GM12878 (cell line): ENCODE measurements at regions of chr1 and their contacts with region 1.

Region 1: DNA sequence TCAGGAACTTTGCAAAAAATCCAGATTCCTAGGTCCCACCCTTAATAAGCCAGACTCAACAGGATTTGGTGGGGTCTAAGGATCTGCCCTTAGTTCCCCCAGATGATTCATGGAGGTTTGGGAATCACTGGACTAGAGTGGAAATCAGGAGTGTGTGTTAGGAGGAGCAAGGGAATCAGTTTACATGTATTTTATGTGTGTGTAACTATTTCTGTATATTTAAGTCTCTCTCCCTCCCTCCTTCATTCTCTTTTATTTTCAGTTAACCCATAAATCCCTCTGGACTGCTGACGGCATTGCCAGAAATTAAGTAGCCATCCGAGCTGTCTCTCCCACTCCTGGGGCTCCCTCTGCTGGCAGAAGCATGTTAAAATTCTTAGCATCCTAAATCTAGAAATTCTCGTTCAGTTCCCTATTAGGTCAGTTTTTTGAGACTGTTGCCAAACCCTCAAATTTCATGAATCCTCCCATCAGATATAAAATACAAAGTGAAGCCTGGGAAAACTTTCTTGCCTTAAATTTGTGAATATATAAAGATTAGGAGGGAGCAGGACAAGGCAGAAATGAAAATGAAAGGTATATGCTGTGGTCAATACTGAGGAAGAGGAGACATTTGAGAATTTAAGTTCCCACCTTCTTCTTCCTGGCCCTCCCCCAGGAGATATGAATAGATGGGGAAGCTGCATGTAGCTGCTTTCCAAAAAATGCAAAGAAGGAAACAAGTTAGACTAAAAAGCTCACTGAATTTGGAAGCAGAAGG is 11.7 kb upstream of the HSD11B1 start:
- DNase-seq: peak; percentile 34
- ATAC-seq: peak; percentile 89
- H3K4me3 ChIP-seq: no peak overlapping the region
- H3K27ac ChIP-seq: no peak overlapping the region
- H3K4me1 ChIP-seq: no peaks in the 10 kb centered on the region
- H3K27me3 ChIP-seq: no peaks in the 10 kb centered on the region
- CTCF ChIP-seq: peak; percentile 80 to 92 (median 83)
- EP300 ChIP-seq: 0 out of 4 replicates have a peak, but pooled peaks of 1 of the 2 experiments have one; percentile 31
- POLR2A ChIP-seq: no peak
- RAD21 ChIP-seq: peak; percentile 97

Region 2: DNA sequence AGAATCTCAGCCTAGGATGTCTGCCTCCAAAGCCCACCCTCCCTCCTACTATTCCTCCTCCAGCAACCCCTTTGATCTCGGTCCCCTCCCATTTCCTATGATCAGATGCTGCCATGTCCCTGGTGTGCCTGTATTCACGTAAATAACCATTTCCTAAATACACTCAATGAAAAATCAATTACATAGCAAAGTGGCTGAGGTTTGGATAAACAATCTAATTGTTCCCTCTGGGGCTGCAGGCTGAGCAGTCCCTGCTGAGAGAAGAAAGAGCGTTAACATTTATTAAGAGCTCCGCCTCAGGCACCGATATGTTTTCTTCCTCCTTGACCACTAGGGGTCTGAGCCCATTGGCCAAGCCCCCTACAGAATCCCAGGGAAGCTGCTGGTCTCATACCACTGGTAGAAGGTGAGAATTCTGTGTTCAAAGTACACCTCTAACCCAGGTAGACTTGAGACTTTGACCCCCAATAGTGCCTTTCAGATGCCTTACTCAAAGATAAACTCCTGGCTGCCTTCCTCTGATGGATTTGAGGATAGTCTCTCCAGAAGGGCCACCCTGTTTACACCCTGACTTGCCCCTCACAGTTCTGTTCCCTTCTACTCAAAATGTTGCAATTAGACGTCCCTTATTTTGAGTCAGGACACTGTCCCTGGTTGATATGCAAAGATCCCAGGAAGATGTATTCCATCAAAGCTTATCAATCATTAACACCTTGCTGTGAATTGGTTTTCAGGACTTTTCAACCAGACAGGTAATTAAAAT is 143.3 kb before region 1 on chr1:
- CTCF ChIA-PET with region 1: no interaction called
- POLR2A ChIA-PET with region 1: no interaction called
- RAD21 ChIA-PET with region 1: no interaction called
- SMC1A ChIA-PET with region 1: no interaction called
- in situ Hi-C with region 1: no loop called
- intact Hi-C with region 1: no loop called
- DNase-seq: no peak
- ATAC-seq: 0 out of 3 replicates have a peak, but pooled peaks have one; percentile 28
- H3K4me3 ChIP-seq: no peak overlapping the region
- H3K27ac ChIP-seq: no peak overlapping the region
- H3K4me1 ChIP-seq: no peaks in the 10 kb centered on the region
- H3K27me3 ChIP-seq: peaks cover 0 to 3% of the 10 kb centered on the region in 2 experiments; a peak in 2 of 4 replicates
- CTCF ChIP-seq: 0 out of 6 replicates have a peak, but pooled peaks of 1 of the 3 experiments have one; percentile 11
- EP300 ChIP-seq: no peak
- POLR2A ChIP-seq: no peak
- RAD21 ChIP-seq: no peak

Region 3: GRCh38 chr1:209576798-209577197 is 116.1 kb before region 1 on chr1:
- CTCF ChIA-PET with region 1: interaction called, 307 read pairs
- POLR2A ChIA-PET with region 1: no interaction called
- RAD21 ChIA-PET with region 1: interaction called, 7 read pairs
- SMC1A ChIA-PET with region 1: interaction called, 30 read pairs
- in situ Hi-C with region 1: loop called (anchors 5 kb)
- intact Hi-C with region 1: loop called (anchors 1 kb)
- DNase-seq: peak; percentile 12
- ATAC-seq: peak; percentile 99
- H3K4me3 ChIP-seq: no peak overlapping the region
- H3K27ac ChIP-seq: no peak overlapping the region
- H3K4me1 ChIP-seq: no peaks in the 10 kb centered on the region
- H3K27me3 ChIP-seq: peaks cover under 1 to 1% of the 10 kb centered on the region in 2 experiments; a peak in 3 of 4 replicates
- CTCF ChIP-seq: peak; percentile 93 to 96 (median 94)
- EP300 ChIP-seq: no peak
- POLR2A ChIP-seq: no peak
- RAD21 ChIP-seq: peak; percentile 86

Region 4: GRCh38 chr1:209601809-209602657 is 90.9 kb before region 1 on chr1:
- CTCF ChIA-PET with region 1: interaction called, 47 read pairs
- POLR2A ChIA-PET with region 1: no interaction called
- RAD21 ChIA-PET with region 1: interaction called, 8 read pairs
- SMC1A ChIA-PET with region 1: interaction called, 15 read pairs
- in situ Hi-C with region 1: no loop called
- intact Hi-C with region 1: loop called (anchors 1 kb)
- DNase-seq: no peak
- ATAC-seq: peak; percentile 95
- H3K4me3 ChIP-seq: no peak overlapping the region
- H3K27ac ChIP-seq: no peak overlapping the region
- H3K4me1 ChIP-seq: peaks cover under 1% of the 10 kb centered on the region; the same call in 1 of the 2 replicates
- H3K27me3 ChIP-seq: no peaks in the 10 kb centered on the region
- CTCF ChIP-seq: peak; percentile 64 to 82 (median 70); a peak in 5 of 6 replicates
- EP300 ChIP-seq: no peak
- POLR2A ChIP-seq: no peak
- RAD21 ChIP-seq: peak; percentile 67

Region 5: DNA sequence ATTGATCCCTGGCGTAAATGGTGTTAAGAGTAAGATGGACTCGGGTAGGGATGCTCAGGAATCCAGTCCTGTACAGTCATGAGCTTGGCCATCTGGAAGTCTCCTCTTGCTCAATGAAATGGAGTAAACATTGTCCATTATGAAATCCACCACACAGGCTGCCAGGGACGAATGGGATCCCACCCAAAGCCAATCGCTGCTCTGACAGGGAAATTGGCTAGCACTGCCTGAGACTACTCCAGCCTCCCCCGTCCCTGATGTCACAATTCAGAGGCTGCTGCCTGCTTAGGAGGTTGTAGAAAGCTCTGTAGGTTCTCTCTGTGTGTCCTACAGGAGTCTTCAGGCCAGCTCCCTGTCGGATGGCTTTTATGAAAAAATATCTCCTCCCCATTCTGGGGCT is 11.7 kb after region 1 on chr1 and contains the start of gene HSD11B1:
- CTCF ChIA-PET with region 1: interaction called, 6 read pairs
- POLR2A ChIA-PET with region 1: no interaction called
- RAD21 ChIA-PET with region 1: interaction called, 11 read pairs
- SMC1A ChIA-PET with region 1: interaction called, 7 read pairs
- in situ Hi-C with region 1: no loop called
- intact Hi-C with region 1: no loop called
- DNase-seq: no peak
- ATAC-seq: no peak
- H3K4me3 ChIP-seq: no peak within 1 kb of the TSS
- H3K27ac ChIP-seq: no peak within 1 kb of the TSS
- H3K4me1 ChIP-seq: peaks cover 3% of the 10 kb centered on the region; the same call in 1 of the 2 replicates
- H3K27me3 ChIP-seq: no peaks in the 10 kb centered on the region
- CTCF ChIP-seq: no peak
- EP300 ChIP-seq: no peak
- POLR2A ChIP-seq: no peak
- RAD21 ChIP-seq: no peak
- polyA plus RNA-seq, gene HSD11B1: 0.04 to 0.27 TPM

Region 6: DNA sequence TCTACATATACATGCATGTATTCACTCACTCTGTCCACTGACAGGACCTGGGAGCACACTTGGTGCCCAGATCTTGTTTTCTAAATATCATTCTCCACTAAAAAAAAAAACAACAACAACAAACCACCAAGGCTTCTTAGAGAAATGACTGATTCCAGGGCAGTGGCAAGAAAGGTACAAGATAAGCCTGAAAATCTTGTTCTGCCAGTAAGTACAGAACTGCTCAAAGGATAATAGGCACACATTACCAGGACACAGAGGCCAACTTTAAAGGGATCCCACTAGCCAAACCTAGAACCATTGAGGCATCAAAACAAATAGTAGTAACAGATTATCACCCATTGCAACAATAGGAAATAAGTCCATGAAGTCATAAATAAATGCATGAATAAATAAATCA is 22.4 kb after region 1 on chr1:
- CTCF ChIA-PET with region 1: no interaction called
- POLR2A ChIA-PET with region 1: no interaction called
- RAD21 ChIA-PET with region 1: no interaction called
- SMC1A ChIA-PET with region 1: no interaction called
- in situ Hi-C with region 1: no loop called
- intact Hi-C with region 1: no loop called
- DNase-seq: no peak
- ATAC-seq: no peak
- H3K4me3 ChIP-seq: no peak overlapping the region
- H3K27ac ChIP-seq: no peak overlapping the region
- H3K4me1 ChIP-seq: no peaks in the 10 kb centered on the region
- H3K27me3 ChIP-seq: no peaks in the 10 kb centered on the region
- CTCF ChIP-seq: no peak
- EP300 ChIP-seq: no peak
- POLR2A ChIP-seq: no peak
- RAD21 ChIP-seq: no peak